ENCODE measurements at regions of chr1 and their contacts with region 1.

Region 1: DNA sequence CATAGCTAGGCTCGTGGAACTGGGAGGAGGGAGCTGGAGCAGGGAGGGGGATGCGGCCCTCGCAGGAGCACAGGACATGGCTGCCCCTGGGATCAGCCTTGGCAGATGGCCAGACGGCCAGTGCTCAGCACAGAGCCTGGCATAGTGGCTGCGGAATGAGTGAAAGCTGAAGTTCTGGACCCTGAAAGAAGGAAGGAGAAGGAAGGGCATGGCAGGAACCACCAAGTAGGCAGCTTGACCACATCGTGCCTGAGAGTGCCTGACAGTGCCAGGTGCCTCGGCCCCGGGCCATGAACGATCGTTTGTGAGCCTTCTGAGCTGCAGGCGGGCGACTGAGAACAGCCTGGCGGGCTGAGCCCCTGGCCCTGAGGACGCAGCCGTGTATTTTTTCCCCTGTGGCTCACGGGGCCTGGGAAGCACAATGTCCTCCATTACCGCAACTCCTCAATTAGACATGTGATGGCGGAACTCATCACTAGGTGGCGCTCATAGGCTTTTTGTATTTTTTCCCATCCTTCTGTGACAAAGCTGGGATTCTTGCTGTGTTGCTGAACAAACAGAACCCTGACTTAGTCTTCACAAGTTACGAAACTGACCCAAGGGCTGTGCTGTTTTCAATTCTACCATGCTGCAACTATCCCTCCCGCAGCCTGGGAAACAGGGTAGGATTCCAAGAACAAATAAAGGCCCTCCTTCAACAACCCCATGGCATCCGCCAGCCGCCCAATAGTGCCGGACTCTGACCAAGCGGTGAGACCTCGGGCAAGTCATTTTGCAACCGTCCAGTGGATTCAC is 29.9 kb upstream of the TMEM61 start:
- DNase-seq: peak; percentile 87
- H3K4me3 ChIP-seq: no peak overlapping the region
- H3K27ac ChIP-seq: peak overlapping the region; percentile 15
- H3K4me1 ChIP-seq: peaks cover 25% of the 10 kb centered on the region
- H3K27me3 ChIP-seq: peaks cover 0 to 1% of the 10 kb centered on the region in 2 experiments
- CTCF ChIP-seq: peak; percentile 71 to 79
- POLR2A ChIP-seq: no peak

Region 2: GRCh38 chr1:54886724-54887664 is 63.6 kb before region 1 on chr1 and contains the start of gene DHCR24:
- CTCF ChIA-PET with region 1: interaction called, 29 read pairs
- POLR2A ChIA-PET with region 1: no interaction called
- dilution Hi-C with region 1: no loop called
- intact Hi-C with region 1: loop called (anchors 2 kb)
- DNase-seq: peak; percentile 85
- H3K4me3 ChIP-seq: peak within 1 kb of the TSS; percentile 52 to 78 (median 56)
- H3K27ac ChIP-seq: peak within 1 kb of the TSS; percentile 25
- H3K4me1 ChIP-seq: peaks cover 32% of the 10 kb centered on the region
- H3K27me3 ChIP-seq: no peaks in the 10 kb centered on the region
- CTCF ChIP-seq: no peak
- POLR2A ChIP-seq: peak; percentile 77
- total RNA-seq, gene DHCR24: 223 and 229 TPM in 2 replicates

Region 3: DNA sequence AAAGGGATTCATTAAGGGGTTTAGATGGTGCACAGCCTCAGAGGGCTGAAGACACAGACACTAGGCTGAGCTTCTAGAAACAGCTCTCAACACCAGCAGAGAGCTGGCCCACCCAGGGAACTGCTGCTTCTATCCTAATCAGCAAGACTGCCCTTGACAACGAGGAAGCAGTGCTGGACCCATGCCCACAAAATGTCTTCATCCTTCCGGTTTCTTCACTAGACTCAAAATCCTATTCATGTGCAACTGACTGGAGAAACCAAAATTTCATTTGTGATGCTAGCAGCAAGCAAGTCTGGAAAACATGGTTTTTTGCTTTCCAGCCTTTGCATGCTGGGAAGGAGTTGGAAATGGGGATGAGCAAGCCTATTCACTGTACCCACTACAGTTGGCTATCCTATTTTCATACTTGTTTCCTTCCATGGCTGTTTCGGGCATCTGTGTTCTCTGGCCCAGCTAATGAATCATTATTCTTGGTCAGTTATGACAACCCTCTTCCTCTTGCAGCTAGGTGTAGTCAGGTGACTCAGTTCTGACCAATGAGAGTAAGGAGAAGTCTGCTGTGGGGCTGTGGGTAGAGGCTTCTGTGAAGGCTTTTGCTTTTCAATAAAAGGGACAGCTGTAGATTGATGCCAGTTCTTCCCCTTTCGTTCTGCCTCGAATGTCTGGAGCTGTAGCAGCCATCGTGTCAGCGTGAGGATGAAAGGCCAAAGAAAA is 15.2 kb after region 1 on chr1:
- CTCF ChIA-PET with region 1: interaction called, 31 read pairs
- POLR2A ChIA-PET with region 1: no interaction called
- dilution Hi-C with region 1: no loop called
- intact Hi-C with region 1: no loop called
- DNase-seq: peak; percentile 18
- H3K4me3 ChIP-seq: no peak overlapping the region
- H3K27ac ChIP-seq: no peak overlapping the region
- H3K4me1 ChIP-seq: peaks cover 8% of the 10 kb centered on the region
- H3K27me3 ChIP-seq: no peaks in the 10 kb centered on the region
- CTCF ChIP-seq: no peak
- POLR2A ChIP-seq: no peak

Region 4: GRCh38 chr1:54973205-54973921 is 22.8 kb after region 1 on chr1:
- CTCF ChIA-PET with region 1: interaction called, 918 read pairs
- POLR2A ChIA-PET with region 1: no interaction called
- dilution Hi-C with region 1: no loop called
- intact Hi-C with region 1: no loop called
- DNase-seq: no peak
- H3K4me3 ChIP-seq: no peak overlapping the region
- H3K27ac ChIP-seq: no peak overlapping the region
- H3K4me1 ChIP-seq: peaks cover 8% of the 10 kb centered on the region
- H3K27me3 ChIP-seq: peaks cover 2 to 6% of the 10 kb centered on the region in 2 experiments
- CTCF ChIP-seq: peak in 1 of 2 donors; percentile 32
- POLR2A ChIP-seq: no peak

Measured in endothelial cell of umbilical vein (primary cell).